Activated CD4-positive, alpha-beta memory T cell treated with anti-CD3 and anti-CD28 coated beads, Interleukin-2, amount 10 ng/mL, durations not matched to agents 7 days and 5 days (primary cell): ENCODE measurements at regions of chr2 and their contacts with region 1.

Region 1: GRCh38 chr2:39107156-39107555 is 13.7 kb downstream of the SOS1 start:
- DNase-seq: no peak
- H3K4me3 Mint-ChIP-seq: no peak overlapping the region
- H3K27ac Mint-ChIP-seq: peak overlapping the region; percentile 40
- H3K4me1 Mint-ChIP-seq: peaks cover 72% of the 10 kb centered on the region
- H3K27me3 Mint-ChIP-seq: no peaks in the 10 kb centered on the region

Region 2: GRCh38 chr2:39094852-39095306 is 12.3 kb before region 1 on chr2:
- CTCF ChIA-PET with region 1: no interaction called
- POLR2A ChIA-PET with region 1: interaction called, 105 read pairs
- DNase-seq: no peak
- H3K4me3 Mint-ChIP-seq: no peak overlapping the region
- H3K27ac Mint-ChIP-seq: peak overlapping the region; percentile 65
- H3K4me1 Mint-ChIP-seq: peaks cover 69% of the 10 kb centered on the region
- H3K27me3 Mint-ChIP-seq: no peaks in the 10 kb centered on the region